Calu3 (cell line): ENCODE measurements at regions of chr7 and their contacts with region 1.

Region 1: GRCh38 chr7:117399820-117400422 is 27.4 kb downstream of the ASZ1 start:
- DNase-seq: no peak
- H3K4me3 Mint-ChIP-seq: no peak overlapping the region
- H3K27ac Mint-ChIP-seq: peak overlapping the region; percentile 93
- H3K4me1 Mint-ChIP-seq: peaks cover 56% of the 10 kb centered on the region
- H3K27me3 Mint-ChIP-seq: no peaks in the 10 kb centered on the region
- CTCF ChIP-seq: peak; percentile 29

Region 2: DNA sequence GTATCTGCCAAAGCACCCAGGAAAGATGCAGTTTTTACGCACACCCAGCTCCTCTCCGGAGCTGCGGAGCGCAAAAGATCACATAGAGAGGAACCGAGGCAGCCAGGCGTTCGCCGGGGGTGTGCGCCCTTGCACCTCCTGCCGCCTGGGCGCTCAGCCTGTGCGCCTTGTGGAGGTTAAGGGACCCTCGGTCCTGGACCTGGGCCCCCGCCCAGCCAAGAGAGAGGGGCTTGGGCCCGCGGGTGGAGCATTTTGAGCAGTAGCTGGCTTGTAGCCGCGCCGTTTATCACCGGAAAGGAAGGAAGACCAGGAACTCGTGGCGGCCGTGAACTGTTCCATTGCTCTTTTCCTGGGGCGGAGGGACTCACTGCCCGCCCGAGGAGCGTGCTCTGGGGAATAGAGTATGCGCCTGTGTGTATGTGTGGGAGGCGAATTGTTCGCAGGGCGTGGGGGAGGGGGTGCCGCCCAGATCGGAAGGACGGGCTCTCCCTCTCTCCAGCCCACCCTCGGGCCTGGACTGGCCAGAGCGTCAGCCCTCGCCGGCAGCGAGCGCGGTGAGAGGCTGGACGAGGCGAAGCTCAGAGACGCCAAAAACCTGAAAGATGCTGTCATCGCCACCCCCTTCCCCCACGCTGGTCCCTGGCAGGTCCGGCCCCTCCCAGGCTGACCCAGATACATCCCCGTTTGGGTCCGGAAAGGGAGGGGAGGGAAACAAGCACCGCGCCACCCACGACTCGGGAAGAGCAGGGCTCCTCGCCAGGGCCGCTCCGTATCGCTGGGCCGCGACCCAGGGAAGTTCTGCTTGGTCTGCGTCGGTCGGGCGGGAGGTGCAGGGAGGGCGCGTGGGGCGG is 75.8 kb before region 1 on chr7:
- CTCF ChIA-PET with region 1: no interaction called
- intact Hi-C with region 1: no loop called
- DNase-seq: peak; percentile 22
- H3K4me3 Mint-ChIP-seq: peak overlapping the region; percentile 72
- H3K27ac Mint-ChIP-seq: no peak overlapping the region
- H3K4me1 Mint-ChIP-seq: peaks cover 10% of the 10 kb centered on the region
- H3K27me3 Mint-ChIP-seq: peaks cover 82% of the 10 kb centered on the region
- CTCF ChIP-seq: no peak

Region 3: GRCh38 chr7:117347962-117348672 is 51.8 kb before region 1 on chr7:
- CTCF ChIA-PET with region 1: no interaction called
- intact Hi-C with region 1: no loop called
- DNase-seq: no peak
- H3K4me3 Mint-ChIP-seq: no peak overlapping the region
- H3K27ac Mint-ChIP-seq: no peak overlapping the region
- H3K4me1 Mint-ChIP-seq: peaks cover 20% of the 10 kb centered on the region
- H3K27me3 Mint-ChIP-seq: peaks cover 22% of the 10 kb centered on the region
- CTCF ChIP-seq: no peak

Region 4: GRCh38 chr7:117435475-117436043 is 35.6 kb after region 1 on chr7:
- CTCF ChIA-PET with region 1: interaction called, 4 read pairs
- intact Hi-C with region 1: loop called (anchors 2 kb)
- DNase-seq: peak; percentile 60
- H3K4me3 Mint-ChIP-seq: peak overlapping the region; percentile 13
- H3K27ac Mint-ChIP-seq: peak overlapping the region; percentile 98
- H3K4me1 Mint-ChIP-seq: peaks cover 51% of the 10 kb centered on the region
- H3K27me3 Mint-ChIP-seq: no peaks in the 10 kb centered on the region
- CTCF ChIP-seq: no peak

Region 5: DNA sequence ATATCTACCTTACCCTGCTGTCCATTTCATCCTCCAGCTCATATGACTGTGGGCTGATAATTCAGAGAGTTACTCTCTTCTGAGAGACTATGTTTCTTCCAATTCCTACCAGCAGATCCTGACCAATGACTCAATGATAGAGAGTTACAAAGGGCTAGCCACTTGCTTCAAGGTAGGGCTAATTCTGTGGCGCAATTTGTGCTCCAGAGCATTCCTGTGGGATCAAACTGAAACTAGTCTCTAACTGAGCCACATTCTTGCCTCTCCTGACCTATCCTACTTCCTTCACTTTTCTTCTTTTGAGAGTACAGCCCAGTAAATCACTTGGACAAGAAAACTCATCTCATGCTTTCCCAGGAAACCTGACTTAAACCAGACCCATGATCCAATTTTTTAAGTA is 45.3 kb after region 1 on chr7:
- CTCF ChIA-PET with region 1: interaction called, 4 read pairs
- intact Hi-C with region 1: loop called (anchors 1 kb)
- DNase-seq: peak; percentile 74
- H3K4me3 Mint-ChIP-seq: peak overlapping the region; percentile 43
- H3K27ac Mint-ChIP-seq: peak overlapping the region; percentile 97
- H3K4me1 Mint-ChIP-seq: peaks cover 68% of the 10 kb centered on the region
- H3K27me3 Mint-ChIP-seq: no peaks in the 10 kb centered on the region
- CTCF ChIP-seq: no peak

Region 6: DNA sequence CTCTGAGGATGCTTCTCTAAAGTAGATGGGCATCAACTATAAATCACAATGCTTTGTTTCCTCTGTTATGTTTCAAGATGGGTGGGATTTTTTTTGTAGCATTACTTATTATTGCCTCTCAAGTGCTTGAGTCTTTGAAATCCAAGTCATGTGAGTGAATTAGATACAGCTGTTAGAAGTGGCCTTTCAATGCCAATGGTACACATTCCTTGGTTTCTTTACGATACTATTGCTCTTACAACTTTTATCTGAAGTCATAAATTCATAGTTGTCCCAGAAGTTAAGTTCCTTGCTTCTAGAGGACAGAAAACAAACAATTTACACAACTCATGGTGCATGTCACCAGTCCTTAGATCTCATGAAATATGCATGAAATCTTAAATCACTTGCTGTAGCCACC is 95.4 kb after region 1 on chr7:
- CTCF ChIA-PET with region 1: no interaction called
- intact Hi-C with region 1: no loop called
- DNase-seq: no peak
- H3K4me3 Mint-ChIP-seq: no peak overlapping the region
- H3K27ac Mint-ChIP-seq: peak overlapping the region; percentile 67
- H3K4me1 Mint-ChIP-seq: peaks cover 79% of the 10 kb centered on the region
- H3K27me3 Mint-ChIP-seq: no peaks in the 10 kb centered on the region
- CTCF ChIP-seq: no peak